Common myeloid progenitor, CD34-positive (primary cell): ENCODE measurements at regions of chr12 and their contacts with region 1.

Region 1: DNA sequence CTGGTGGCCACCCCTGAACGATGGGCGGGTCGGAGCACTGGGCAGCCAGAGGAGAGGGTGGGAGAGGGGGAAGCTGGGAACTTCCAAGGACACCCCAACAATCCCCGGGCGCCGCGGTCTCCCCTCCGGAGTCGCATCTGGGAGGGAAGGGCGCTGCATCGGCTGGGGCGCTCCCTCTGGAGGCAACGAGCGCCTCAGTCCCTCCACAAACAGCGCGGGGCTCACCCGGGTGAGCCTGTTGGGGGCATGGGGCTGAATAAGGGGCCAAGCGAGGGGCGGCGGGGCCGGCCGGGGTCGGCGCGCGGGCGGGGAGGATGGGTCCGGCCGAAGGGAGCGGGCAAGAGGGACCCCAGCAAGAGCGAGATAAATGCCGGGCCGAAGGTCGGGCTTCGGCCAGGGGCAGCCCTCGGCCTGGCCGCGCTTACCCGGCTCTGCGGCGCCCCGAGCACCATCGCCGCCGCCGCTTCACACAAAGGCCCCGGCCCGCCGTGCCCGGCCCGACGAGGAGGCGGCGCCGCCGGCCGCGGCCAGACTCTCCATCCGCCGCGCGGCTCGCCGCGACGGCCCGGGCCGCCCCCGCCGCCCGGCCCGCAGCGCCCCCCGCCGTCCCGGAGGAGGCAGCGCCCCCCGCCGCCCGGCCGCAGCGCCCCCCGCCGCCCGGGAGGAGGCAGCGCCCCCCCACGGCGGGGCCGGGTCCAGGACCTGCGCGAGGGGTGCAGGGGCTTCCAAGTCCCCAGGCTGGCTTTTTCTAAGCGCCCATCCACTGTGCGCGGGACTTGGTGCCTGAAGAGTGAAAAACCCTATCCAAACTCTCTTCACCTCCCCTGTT is at the start of gene ZBTB39:
- DNase-seq: peak; percentile 64 to 79 (median 73)
- H3K4me3 ChIP-seq: peak within 1 kb of the TSS; percentile 70 to 89 (median 81)
- H3K27ac ChIP-seq: peak within 1 kb of the TSS; percentile 55 to 77
- H3K4me1 ChIP-seq: peaks cover 9 to 30% (median 23%) of the 10 kb centered on the region in 4 experiments
- H3K27me3 ChIP-seq: no peaks in the 10 kb centered on the region

Region 2: GRCh38 chr12:56723889-56724700 is 282.1 kb before region 1 on chr12:
- CTCF ChIA-PET with region 1: no interaction called
- POLR2A ChIA-PET with region 1: no interaction called
- DNase-seq: peak in 2 of 3 donors; percentile 31 to 36
- H3K4me3 ChIP-seq: peak overlapping the region; percentile 78 to 100 (median 97)
- H3K27ac ChIP-seq: peak overlapping the region; percentile 90 to 96
- H3K4me1 ChIP-seq: peaks cover 41 to 65% (median 61%) of the 10 kb centered on the region in 4 experiments
- H3K27me3 ChIP-seq: no peaks in the 10 kb centered on the region

Region 3: GRCh38 chr12:56751712-56752598 is 254.2 kb before region 1 on chr12 and contains the start of gene PRIM1:
- CTCF ChIA-PET with region 1: interaction called, 74 read pairs
- POLR2A ChIA-PET with region 1: no interaction called
- DNase-seq: peak; percentile 81 to 88 (median 85)
- H3K4me3 ChIP-seq: peak within 1 kb of the TSS; percentile 79 to 99 (median 92)
- H3K27ac ChIP-seq: peak within 1 kb of the TSS; percentile 40 to 73
- H3K4me1 ChIP-seq: peaks cover 10 to 29% (median 21%) of the 10 kb centered on the region in 4 experiments
- H3K27me3 ChIP-seq: no peaks in the 10 kb centered on the region

Region 4: DNA sequence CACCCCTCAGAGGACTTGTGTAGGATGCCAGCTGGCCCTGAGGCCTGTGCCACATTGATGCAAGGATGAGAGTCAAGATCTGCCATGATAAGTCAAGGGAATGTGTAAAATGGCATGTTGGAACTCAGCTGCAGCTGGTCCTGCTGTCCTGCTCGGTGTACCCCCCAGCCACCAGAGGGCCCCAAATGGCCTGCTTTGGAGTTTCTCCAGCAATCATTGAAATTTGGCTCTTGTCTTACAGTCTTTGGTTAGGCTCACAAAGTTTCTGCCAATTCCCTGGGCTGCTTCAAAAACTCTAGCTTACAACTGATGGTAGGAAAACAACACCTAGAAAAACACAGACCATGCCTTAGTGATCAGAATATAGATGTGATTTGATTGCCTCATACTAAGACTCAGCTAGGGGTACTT is 166.3 kb before region 1 on chr12:
- CTCF ChIA-PET with region 1: interaction called, 67 read pairs
- POLR2A ChIA-PET with region 1: no interaction called
- DNase-seq: peak; percentile 67 to 78 (median 74)
- H3K4me3 ChIP-seq: no peak overlapping the region
- H3K27ac ChIP-seq: no peak overlapping the region
- H3K4me1 ChIP-seq: peaks cover 0 to 7% (median 0%) of the 10 kb centered on the region in 4 experiments
- H3K27me3 ChIP-seq: peaks cover 0 to 7% (median 0%) of the 10 kb centered on the region in 5 experiments

Region 5: DNA sequence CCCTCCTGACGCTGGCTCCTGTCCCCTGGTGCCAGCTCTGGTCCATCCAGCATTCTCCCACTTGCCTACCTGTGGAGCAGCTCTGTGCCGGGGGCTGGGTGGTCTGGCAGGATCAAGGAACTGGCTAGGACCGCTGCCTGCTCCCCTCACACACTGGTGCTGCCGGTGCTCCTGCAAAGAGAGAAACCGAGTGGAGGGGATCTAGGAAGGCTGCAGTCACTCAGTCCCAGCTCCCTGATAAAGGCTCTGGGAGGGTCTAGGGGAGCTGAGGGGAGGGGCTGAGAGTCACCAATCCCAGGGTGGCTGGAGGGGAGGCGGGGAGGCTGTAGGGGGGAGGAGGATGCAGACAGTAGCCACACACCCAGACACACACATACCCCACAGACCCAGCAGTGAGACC is 10.1 kb after region 1 on chr12 and contains the start of gene TAC3:
- CTCF ChIA-PET with region 1: interaction called, 28 read pairs
- POLR2A ChIA-PET with region 1: no interaction called
- DNase-seq: no peak
- H3K4me3 ChIP-seq: no peak within 1 kb of the TSS
- H3K27ac ChIP-seq: no peak within 1 kb of the TSS
- H3K4me1 ChIP-seq: no peaks in the 10 kb centered on the region
- H3K27me3 ChIP-seq: peaks cover 0 to 8% (median 0%) of the 10 kb centered on the region in 5 experiments

Region 6: GRCh38 chr12:57058454-57058853 is 52.3 kb after region 1 on chr12:
- CTCF ChIA-PET with region 1: interaction called, 121 read pairs
- POLR2A ChIA-PET with region 1: interaction called, 3 read pairs
- DNase-seq: no peak
- H3K4me3 ChIP-seq: no peak overlapping the region
- H3K27ac ChIP-seq: peak overlapping the region in 1 of 2 experiments; percentile 1
- H3K4me1 ChIP-seq: no peaks in the 10 kb centered on the region
- H3K27me3 ChIP-seq: no peaks in the 10 kb centered on the region

Region 7: DNA sequence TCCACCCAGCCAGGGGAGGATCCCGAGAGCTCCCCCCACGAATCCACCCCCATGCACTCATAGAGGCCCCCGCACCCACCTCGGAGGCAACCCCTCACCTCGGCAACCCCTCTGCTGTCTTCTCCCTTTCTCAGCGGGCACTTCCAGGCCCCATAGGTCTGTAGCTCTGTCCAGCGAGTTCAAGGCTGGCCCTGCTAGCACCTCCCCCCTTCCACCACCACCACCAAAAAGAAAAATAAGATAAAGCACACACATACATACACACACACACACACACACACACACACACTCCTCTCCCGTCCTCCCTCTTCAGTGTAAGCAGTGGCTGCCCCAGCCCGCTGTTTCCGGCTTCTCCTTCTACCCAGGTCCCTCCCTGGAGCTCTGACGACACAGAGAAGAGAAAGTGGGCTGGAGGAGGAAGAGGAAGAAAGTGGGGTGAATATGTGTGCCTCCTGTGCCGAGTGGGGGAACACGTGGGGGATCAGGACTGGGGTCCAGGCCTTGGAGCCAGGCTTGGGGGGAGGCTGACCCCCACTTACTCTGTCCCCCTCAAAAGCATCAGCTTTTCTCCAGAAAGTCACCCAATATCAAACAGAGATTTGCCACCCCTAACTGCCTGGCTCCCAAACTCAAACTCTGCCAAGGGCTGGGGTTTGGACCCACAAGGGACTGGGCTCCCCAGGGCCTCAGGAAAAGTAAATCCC is 105.0 kb after region 1 on chr12 and contains the start of gene STAT6:
- CTCF ChIA-PET with region 1: interaction called, 12 read pairs
- POLR2A ChIA-PET with region 1: no interaction called
- DNase-seq: peak; percentile 92 to 96 (median 94)
- H3K4me3 ChIP-seq: peak within 1 kb of the TSS; percentile 72 to 98 (median 90)
- H3K27ac ChIP-seq: peak within 1 kb of the TSS; percentile 85 to 95
- H3K4me1 ChIP-seq: peaks cover 6 to 37% (median 30%) of the 10 kb centered on the region in 4 experiments
- H3K27me3 ChIP-seq: no peaks in the 10 kb centered on the region

Region 8: GRCh38 chr12:57332646-57333312 is 326.6 kb after region 1 on chr12:
- CTCF ChIA-PET with region 1: no interaction called
- POLR2A ChIA-PET with region 1: no interaction called
- DNase-seq: no peak
- H3K4me3 ChIP-seq: no peak overlapping the region
- H3K27ac ChIP-seq: no peak overlapping the region
- H3K4me1 ChIP-seq: no peaks in the 10 kb centered on the region
- H3K27me3 ChIP-seq: no peaks in the 10 kb centered on the region